Activated T-helper 1 cell treated with anti-CD3 and anti-CD28 coated beads, Interleukin-12 subunit alpha, Interleukin-12 subunit beta, Interleukin-2, Interleukin-4 antibody, amounts not matched to agents 30 ng/mL and 10 ng/mL and 1 ng/mL, durations not matched to agents 14 hours and 24 hours and 36 hours (primary cell): ENCODE measurements at regions of chr21 and their contacts with region 1.

Region 1: GRCh38 chr21:23740463-23740862 is 1866.8 kb downstream of the MRPL39 start:
- DNase-seq: no peak
- H3K4me3 Mint-ChIP-seq: no peak overlapping the region
- H3K27ac Mint-ChIP-seq: no peak overlapping the region
- H3K4me1 Mint-ChIP-seq: no peaks in the 10 kb centered on the region
- H3K27me3 Mint-ChIP-seq: peaks cover 4% of the 10 kb centered on the region

Region 2: DNA sequence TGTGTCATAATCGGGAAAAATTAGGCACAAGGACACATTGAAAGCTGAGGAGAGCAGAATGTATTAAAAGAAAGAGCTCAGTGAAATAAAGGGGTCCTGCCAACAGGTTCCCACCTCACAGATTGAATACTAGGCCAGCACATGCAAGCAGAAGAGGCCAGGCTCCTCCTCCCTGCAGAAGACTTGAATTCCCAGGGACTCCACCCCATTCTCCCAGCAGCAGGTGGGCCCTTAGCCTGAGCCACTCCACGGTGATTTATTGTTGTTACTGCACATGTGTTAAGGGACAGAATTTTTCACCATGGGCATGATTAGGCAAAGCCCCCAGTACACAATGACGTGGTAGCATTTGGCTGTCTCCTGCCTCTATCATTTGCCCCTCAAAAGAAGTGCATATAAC is 897.6 kb before region 1 on chr21:
- intact Hi-C with region 1: loop called (anchors 5 kb)
- DNase-seq: no peak
- H3K4me3 Mint-ChIP-seq: no peak overlapping the region
- H3K27ac Mint-ChIP-seq: no peak overlapping the region
- H3K4me1 Mint-ChIP-seq: no peaks in the 10 kb centered on the region
- H3K27me3 Mint-ChIP-seq: no peaks in the 10 kb centered on the region

Region 3: DNA sequence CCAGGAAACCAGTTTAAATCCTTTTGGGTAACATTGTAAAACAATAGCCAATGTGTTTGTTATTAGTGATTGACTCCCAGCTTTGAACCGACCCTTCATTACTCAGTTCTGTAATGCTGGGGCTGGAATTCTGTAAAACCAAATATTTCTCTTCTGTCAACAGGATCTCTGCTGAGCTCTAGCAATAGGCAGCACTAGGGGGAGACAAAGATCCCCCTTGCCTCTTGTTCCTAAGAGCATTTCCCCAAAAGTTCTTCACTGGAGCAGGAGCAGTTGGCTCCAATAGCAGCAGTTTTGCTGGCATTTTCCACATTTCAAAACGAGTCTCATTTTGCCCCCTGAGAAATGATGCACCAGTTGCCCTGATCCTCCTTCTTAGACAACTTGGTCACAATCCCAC is 195.8 kb after region 1 on chr21:
- intact Hi-C with region 1: no loop called
- DNase-seq: no peak
- H3K4me3 Mint-ChIP-seq: no peak overlapping the region
- H3K27ac Mint-ChIP-seq: no peak overlapping the region
- H3K4me1 Mint-ChIP-seq: no peaks in the 10 kb centered on the region
- H3K27me3 Mint-ChIP-seq: peaks cover 8% of the 10 kb centered on the region